ENCODE measurements at regions of chr3 and their contacts with region 1.

Region 1: DNA sequence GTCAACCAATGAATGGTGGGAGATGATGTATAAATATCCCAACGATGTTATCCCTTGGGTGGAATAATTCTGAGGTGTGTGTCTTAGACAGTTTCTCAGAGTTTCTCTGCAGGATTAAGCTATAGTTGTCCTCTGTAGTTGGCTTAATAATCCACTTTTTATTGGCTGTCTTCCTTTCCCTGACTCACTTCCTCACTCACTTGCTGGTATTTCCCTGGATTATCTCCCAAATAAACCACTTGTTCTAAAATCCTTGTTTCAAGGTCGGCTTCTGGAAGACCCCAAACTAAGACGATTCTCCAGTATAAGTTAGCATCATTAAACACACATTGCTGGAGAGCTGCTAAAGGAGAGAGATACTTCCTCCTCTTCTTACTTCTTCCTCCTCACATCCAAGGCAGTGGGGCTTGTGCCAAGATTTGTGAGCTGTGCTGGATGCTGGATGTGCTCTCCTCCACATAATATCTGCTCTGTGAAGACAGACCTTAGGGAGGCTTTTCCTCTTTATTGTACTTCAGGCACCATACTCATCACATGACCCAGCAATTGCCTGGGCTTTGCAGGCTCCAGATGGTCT is 22.5 kb upstream of the ROPN1 start:
- DNase-seq: no peak
- ATAC-seq: no peak
- H3K4me3 ChIP-seq: no peak overlapping the region
- H3K27ac ChIP-seq: no peak overlapping the region
- H3K4me1 ChIP-seq: no peaks in the 10 kb centered on the region
- H3K27me3 ChIP-seq: peaks cover 58% of the 10 kb centered on the region
- CTCF ChIP-seq: no peak
- POLR2A ChIP-seq: no peak
- RAD21 ChIP-seq: no peak

Region 2: GRCh38 chr3:124032648-124033359 is 18.4 kb after region 1 on chr3:
- CTCF ChIA-PET with region 1: interaction called, 11 read pairs
- POLR2A ChIA-PET with region 1: no interaction called
- RAD21 ChIA-PET with region 1: no interaction called
- intact Hi-C with region 1: no loop called
- DNase-seq: peak; percentile 28
- ATAC-seq: peak; percentile 98
- H3K4me3 ChIP-seq: peak overlapping the region; percentile 38 to 58
- H3K27ac ChIP-seq: peak overlapping the region; percentile 20; the same call in 1 of the 2 replicates
- H3K4me1 ChIP-seq: peaks cover 4 to 6% of the 10 kb centered on the region in 2 experiments; a peak in 2 of 4 replicates
- H3K27me3 ChIP-seq: peaks cover 46% of the 10 kb centered on the region
- CTCF ChIP-seq: peak in 2 of 3 experiments; percentile 48 to 63; a peak in 4 of 6 replicates
- POLR2A ChIP-seq: no peak
- RAD21 ChIP-seq: no peak

Region 3: DNA sequence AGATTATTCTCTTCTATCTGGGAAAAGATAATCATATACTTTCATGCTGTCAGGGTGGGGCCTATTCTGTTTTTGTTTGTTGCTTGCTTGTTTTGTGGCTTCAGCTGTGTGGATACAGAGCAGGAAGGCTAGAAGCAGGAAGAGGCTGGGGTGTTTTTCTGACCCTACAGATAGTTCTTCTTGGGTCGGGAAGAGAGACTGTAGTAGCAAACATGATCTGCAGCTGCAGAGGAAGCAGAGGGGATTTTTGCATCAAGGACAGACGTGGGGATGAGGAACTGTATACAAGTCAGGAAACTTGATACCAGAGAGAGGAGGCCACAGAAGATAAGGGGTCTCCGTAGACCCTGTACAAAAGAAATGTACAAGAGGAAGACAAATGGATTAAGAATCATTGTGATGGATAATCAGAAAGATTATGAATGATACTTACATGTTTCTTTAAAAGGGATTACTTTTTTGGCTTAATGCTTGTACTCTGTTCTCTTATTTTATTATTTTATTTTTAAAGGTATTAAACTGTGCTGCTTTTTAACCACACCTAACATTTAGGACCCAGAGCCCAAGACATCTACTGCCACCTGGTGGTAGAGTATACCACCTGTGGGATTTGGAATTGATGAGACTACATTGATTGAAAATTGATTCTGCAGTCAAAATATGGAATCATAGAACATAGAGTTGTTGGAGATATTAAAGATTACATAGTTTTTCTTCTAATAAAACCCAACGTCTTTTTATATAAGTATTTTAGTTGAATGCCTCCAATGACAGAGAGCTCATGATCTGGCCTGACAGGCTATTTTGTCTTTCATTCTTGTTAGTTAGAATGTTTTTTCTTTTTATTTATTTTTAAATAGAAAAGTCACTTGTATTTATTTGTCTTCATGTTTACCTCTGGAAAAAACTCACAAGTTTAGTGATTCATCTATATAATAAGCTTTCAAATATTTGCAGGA is 64.8 kb after region 1 on chr3:
- CTCF ChIA-PET with region 1: interaction called, 5 read pairs
- POLR2A ChIA-PET with region 1: no interaction called
- RAD21 ChIA-PET with region 1: no interaction called
- intact Hi-C with region 1: loop called (anchors 1 kb)
- DNase-seq: peak; percentile 22
- ATAC-seq: peak; percentile 67
- H3K4me3 ChIP-seq: no peak overlapping the region
- H3K27ac ChIP-seq: no peak overlapping the region
- H3K4me1 ChIP-seq: no peaks in the 10 kb centered on the region
- H3K27me3 ChIP-seq: peaks cover 64% of the 10 kb centered on the region
- CTCF ChIP-seq: peak; percentile 71 to 78 (median 73)
- POLR2A ChIP-seq: no peak
- RAD21 ChIP-seq: peak; percentile 79

Region 4: DNA sequence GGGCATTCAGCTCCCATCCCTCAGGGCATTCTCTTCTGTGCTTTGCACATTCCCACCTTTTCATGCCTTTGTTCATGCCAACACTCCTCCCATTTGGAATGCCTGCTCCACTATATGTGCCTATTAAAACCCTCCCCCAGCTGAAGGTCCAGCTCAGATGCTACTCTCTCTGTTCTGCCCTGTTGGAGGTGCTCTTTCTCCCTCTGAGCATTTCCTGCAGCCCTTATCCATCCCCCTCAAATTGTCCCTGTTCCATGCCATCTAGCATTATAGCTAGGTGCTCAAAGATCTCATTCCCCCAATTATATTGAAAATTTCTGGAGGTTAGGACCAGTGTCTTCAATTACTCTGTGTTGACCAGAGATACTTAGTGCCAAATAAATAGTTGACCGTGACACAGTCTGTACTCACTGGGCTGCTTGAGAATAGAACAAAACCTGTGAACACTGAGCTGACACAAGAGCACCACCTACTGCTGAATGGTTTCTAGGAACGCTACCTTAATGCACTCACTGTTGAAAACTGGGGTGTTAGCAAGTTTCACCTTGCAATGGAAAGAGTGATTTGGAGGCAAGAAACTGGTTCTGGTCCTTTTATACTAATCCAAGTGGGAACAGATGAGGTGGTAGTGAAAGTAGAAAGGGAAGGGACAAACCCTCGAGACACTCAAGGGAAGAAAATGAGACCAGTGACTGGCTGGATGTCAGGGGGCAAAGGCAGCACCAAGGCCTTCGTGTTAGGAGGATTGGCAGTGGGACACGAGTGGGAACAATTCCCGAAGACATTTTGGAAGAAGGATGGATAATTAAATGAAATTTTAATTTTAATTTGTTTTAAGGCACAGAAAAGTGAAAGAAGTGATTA is 267.2 kb after region 1 on chr3:
- CTCF ChIA-PET with region 1: interaction called, 10 read pairs
- POLR2A ChIA-PET with region 1: no interaction called
- RAD21 ChIA-PET with region 1: no interaction called
- intact Hi-C with region 1: loop called (anchors 2 kb)
- DNase-seq: no peak
- ATAC-seq: peak; percentile 78
- H3K4me3 ChIP-seq: no peak overlapping the region
- H3K27ac ChIP-seq: no peak overlapping the region
- H3K4me1 ChIP-seq: no peaks in the 10 kb centered on the region
- H3K27me3 ChIP-seq: peaks cover 45% of the 10 kb centered on the region; the same call in 1 of the 2 replicates
- CTCF ChIP-seq: peak; percentile 33 to 50 (median 40); a peak in 3 of 6 replicates
- POLR2A ChIP-seq: no peak
- RAD21 ChIP-seq: peak; percentile 59

Region 5: DNA sequence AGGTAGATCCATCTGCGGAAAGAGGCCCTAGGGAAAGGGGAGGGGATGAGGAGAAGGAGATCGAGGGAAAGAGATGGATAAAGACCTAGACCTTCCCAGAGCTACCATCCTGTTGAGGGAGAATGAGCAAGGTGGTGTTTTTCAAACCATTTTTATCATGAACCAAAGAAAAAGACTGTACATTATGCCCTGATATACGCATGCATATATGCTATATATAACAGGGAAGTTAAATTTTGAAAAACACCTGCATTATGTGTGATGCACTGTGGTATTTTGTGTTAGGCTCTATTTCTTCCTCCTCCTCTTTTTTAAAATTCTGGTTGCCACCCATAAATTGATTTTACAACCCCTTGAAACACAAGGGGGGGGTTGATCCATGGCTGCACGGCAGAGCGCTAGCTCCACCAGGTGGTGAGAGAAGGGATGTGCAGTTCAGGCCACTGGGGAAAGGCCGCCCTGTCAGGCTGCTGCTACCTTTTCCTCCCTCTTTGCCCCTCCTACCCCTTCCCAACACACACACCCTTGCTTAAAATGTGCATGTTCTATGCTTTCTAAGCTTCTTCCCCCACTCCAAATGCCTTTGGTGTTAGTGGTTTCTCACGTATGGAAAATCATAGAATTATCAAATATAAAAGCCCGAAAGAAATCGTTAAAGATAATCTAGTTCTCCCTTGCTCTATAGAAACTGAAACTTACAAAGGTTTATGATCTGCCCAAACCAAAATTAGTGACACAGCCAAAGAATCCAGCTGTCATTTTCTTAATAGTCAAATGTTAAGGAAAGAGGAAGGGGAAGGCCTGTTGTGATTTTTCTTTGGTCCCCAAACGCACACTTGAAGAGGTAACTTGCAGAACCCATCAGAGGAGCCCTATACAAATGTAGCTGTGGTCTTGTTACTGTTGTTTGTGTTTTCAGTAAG is 453.8 kb after region 1 on chr3:
- CTCF ChIA-PET with region 1: interaction called, 3 read pairs
- POLR2A ChIA-PET with region 1: no interaction called
- RAD21 ChIA-PET with region 1: no interaction called
- intact Hi-C with region 1: loop called (anchors 5 kb)
- DNase-seq: peak; percentile 26
- ATAC-seq: peak; percentile 99
- H3K4me3 ChIP-seq: no peak overlapping the region
- H3K27ac ChIP-seq: no peak overlapping the region
- H3K4me1 ChIP-seq: no peaks in the 10 kb centered on the region
- H3K27me3 ChIP-seq: peaks cover 68% of the 10 kb centered on the region
- CTCF ChIP-seq: peak; percentile 77 to 98 (median 98)
- POLR2A ChIP-seq: no peak
- RAD21 ChIP-seq: peak; percentile 91

Region 6: GRCh38 chr3:124552239-124552638 is 537.8 kb after region 1 on chr3:
- CTCF ChIA-PET with region 1: no interaction called
- POLR2A ChIA-PET with region 1: no interaction called
- RAD21 ChIA-PET with region 1: no interaction called
- intact Hi-C with region 1: loop called (anchors 2 kb)
- DNase-seq: no peak
- ATAC-seq: no peak
- H3K4me3 ChIP-seq: no peak overlapping the region
- H3K27ac ChIP-seq: no peak overlapping the region
- H3K4me1 ChIP-seq: peaks cover 0 to 3% of the 10 kb centered on the region in 2 experiments; a peak in 1 of 4 replicates
- H3K27me3 ChIP-seq: peaks cover 35% of the 10 kb centered on the region
- CTCF ChIP-seq: no peak
- POLR2A ChIP-seq: no peak
- RAD21 ChIP-seq: no peak